ENCODE measurements at regions of chr11 and their contacts with region 1.

Region 1: GRCh38 chr11:77776455-77776854 is 44.1 kb downstream of the RSF1 start:
- DNase-seq: no peak
- H3K4me3 Mint-ChIP-seq: no peak overlapping the region
- H3K27ac Mint-ChIP-seq: no peak overlapping the region
- H3K4me1 Mint-ChIP-seq: peaks cover 1% of the 10 kb centered on the region
- H3K27me3 Mint-ChIP-seq: no peaks in the 10 kb centered on the region
- CTCF ChIP-seq: no peak

Region 2: DNA sequence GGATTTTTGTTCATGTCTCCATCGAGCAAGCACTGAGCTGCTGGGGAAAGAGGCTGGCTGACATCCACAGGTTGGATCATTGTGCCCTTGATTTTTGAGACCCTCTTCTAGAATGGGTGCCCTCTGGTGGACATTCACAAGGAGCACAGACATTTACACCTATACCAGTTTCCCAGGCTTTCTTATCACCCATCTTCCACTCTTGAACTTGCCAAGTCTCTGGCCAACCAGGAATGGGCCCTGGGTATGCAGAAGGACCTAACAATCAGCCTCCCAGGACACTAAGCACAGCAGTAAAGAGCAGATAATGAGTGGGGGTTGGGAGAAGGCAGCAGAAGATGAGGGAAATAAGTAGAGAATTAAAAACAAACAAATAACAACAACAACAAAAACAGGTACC is 223.7 kb after region 1 on chr11:
- CTCF ChIA-PET with region 1: no interaction called
- intact Hi-C with region 1: loop called (anchors 1 kb)
- DNase-seq: peak; percentile 56
- H3K4me3 Mint-ChIP-seq: no peak overlapping the region
- H3K27ac Mint-ChIP-seq: no peak overlapping the region
- H3K4me1 Mint-ChIP-seq: peaks cover 3% of the 10 kb centered on the region
- H3K27me3 Mint-ChIP-seq: no peaks in the 10 kb centered on the region
- CTCF ChIP-seq: peak; percentile 70